Activated T-helper 1 cell treated with anti-CD3 and anti-CD28 coated beads, Interleukin-12 subunit alpha, Interleukin-12 subunit beta, Interleukin-2, Interleukin-4 antibody, amounts not matched to agents 30 ng/mL and 10 ng/mL and 1 ng/mL, durations not matched to agents 14 hours and 24 hours and 36 hours (primary cell): ENCODE measurements at regions of chr21 and their contacts with region 1.

Region 1: GRCh38 chr21:44911389-44912157 is 9.1 kb downstream of the ITGB2 start:
- DNase-seq: peak; percentile 50
- H3K4me3 Mint-ChIP-seq: peak overlapping the region; percentile 78
- H3K27ac Mint-ChIP-seq: peak overlapping the region; percentile 90
- H3K4me1 Mint-ChIP-seq: peaks cover 63% of the 10 kb centered on the region
- H3K27me3 Mint-ChIP-seq: no peaks in the 10 kb centered on the region

Region 2: GRCh38 chr21:44801468-44802395 is 109.8 kb before region 1 on chr21 and contains the start of gene UBE2G2:
- intact Hi-C with region 1: loop called (anchors 1 kb)
- DNase-seq: peak; percentile 87
- H3K4me3 Mint-ChIP-seq: peak within 1 kb of the TSS; percentile 99
- H3K27ac Mint-ChIP-seq: peak within 1 kb of the TSS; percentile 94
- H3K4me1 Mint-ChIP-seq: peaks cover 54% of the 10 kb centered on the region
- H3K27me3 Mint-ChIP-seq: no peaks in the 10 kb centered on the region
- total RNA-seq, gene UBE2G2: 137 and 151 TPM in 2 replicates

Region 3: DNA sequence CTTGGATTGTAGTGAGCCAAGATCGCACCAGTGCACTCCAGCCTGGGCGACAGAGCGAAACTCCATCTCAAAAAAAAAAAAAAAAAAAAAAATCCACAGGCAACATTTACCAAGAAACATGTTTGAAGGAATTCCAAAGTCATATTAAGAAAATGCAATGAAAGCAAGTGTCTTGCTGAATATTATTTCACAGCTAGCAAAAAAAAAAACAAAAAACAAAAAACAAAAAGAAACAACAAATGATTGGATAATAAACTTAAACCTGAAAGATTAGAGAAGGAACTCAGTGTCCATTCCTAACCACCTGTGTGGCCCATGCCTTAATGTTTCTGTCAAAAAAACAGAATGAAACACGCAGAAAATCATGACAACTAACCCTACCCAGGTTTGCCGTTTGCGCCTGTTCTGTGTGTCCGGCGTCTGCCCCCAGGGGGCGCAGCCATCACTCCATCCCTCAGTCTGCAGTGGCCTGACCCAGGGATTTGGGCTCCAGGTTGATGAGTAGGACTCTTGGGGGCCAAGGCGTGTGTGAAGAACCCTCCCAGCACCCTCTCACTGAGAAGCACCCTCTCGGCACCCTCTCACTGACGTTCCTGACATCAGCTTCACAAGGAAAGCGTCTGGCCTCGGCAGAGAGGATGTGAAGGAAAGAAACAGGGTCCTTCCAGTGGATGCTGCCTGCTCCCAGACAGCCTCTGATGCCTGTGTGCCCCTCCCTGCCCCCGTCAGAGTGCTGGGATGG is 18.9 kb before region 1 on chr21:
- intact Hi-C with region 1: loop called (anchors 1 kb)
- DNase-seq: peak; percentile 68
- H3K4me3 Mint-ChIP-seq: no peak overlapping the region
- H3K27ac Mint-ChIP-seq: peak overlapping the region; percentile 35
- H3K4me1 Mint-ChIP-seq: peaks cover 7% of the 10 kb centered on the region
- H3K27me3 Mint-ChIP-seq: no peaks in the 10 kb centered on the region

Region 4: GRCh38 chr21:46442938-46443337 is 1531.4 kb after region 1 on chr21:
- intact Hi-C with region 1: no loop called
- DNase-seq: no peak
- H3K4me3 Mint-ChIP-seq: no peak overlapping the region
- H3K27ac Mint-ChIP-seq: no peak overlapping the region
- H3K4me1 Mint-ChIP-seq: peaks cover 5% of the 10 kb centered on the region
- H3K27me3 Mint-ChIP-seq: no peaks in the 10 kb centered on the region